ENCODE measurements at regions of chr20 and their contacts with region 1.

Region 1: DNA sequence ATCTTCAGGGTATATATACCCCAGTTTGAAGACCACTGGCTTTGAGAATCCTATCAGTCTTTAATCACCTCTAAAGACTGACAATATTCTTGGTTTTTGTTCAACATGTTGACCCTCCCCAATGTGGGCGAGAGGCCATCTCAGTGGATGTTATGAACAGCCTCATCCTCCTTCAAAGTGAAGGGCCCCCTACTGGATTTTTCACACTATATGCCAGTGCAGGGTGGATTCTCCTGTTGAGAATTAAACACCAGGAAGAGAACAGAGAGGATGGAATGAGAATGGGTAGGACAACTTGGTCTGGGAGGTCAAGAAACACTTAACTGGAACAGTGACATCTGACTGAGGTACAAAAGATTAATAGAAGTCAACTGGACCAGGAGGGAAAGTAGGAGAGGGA is 327.1 kb downstream of the MAFB start:
- DNase-seq: no peak
- H3K4me3 ChIP-seq: no peak overlapping the region
- H3K27ac ChIP-seq: no peak overlapping the region
- H3K4me1 ChIP-seq: no peaks in the 10 kb centered on the region
- H3K27me3 ChIP-seq: peaks cover 4% of the 10 kb centered on the region
- CTCF ChIP-seq: peak in 1 of 3 experiments; percentile 3

Region 2: DNA sequence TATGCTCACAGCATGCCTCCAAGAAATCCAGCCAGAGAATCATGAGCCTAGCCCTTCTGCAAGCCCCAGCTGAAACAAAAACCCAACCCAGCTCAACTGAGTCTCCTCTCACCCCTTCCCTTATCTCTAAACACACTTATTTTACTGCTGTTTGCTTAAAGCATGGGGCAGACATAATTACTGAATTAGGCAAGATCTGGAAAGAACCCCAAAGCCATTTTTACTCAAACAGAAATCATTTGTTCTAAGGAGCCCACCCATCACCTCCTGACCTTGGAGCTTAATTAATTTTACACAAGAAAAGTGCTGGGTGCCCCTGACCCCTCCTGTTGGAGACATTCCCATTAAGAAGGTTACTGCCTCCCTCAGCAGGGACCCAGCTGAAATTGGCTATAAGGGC is 35.6 kb after region 1 on chr20:
- dilution Hi-C with region 1: loop called (anchors 5 kb)
- DNase-seq: no peak
- H3K4me3 ChIP-seq: no peak overlapping the region
- H3K27ac ChIP-seq: no peak overlapping the region
- H3K4me1 ChIP-seq: no peaks in the 10 kb centered on the region
- H3K27me3 ChIP-seq: no peaks in the 10 kb centered on the region
- CTCF ChIP-seq: no peak

Region 3: GRCh38 chr20:40591119-40591518 is 229.2 kb after region 1 on chr20:
- dilution Hi-C with region 1: no loop called
- DNase-seq: no peak
- H3K4me3 ChIP-seq: no peak overlapping the region
- H3K27ac ChIP-seq: no peak overlapping the region
- H3K4me1 ChIP-seq: peaks cover 16% of the 10 kb centered on the region
- H3K27me3 ChIP-seq: no peaks in the 10 kb centered on the region
- CTCF ChIP-seq: no peak

Region 4: GRCh38 chr20:40781327-40782042 is 419.6 kb after region 1 on chr20:
- dilution Hi-C with region 1: no loop called
- DNase-seq: no peak
- H3K4me3 ChIP-seq: no peak overlapping the region
- H3K27ac ChIP-seq: no peak overlapping the region
- H3K4me1 ChIP-seq: no peaks in the 10 kb centered on the region
- H3K27me3 ChIP-seq: peaks cover 7% of the 10 kb centered on the region
- CTCF ChIP-seq: no peak